ENCODE measurements at regions of chr2 and their contacts with region 1.

Region 1: DNA sequence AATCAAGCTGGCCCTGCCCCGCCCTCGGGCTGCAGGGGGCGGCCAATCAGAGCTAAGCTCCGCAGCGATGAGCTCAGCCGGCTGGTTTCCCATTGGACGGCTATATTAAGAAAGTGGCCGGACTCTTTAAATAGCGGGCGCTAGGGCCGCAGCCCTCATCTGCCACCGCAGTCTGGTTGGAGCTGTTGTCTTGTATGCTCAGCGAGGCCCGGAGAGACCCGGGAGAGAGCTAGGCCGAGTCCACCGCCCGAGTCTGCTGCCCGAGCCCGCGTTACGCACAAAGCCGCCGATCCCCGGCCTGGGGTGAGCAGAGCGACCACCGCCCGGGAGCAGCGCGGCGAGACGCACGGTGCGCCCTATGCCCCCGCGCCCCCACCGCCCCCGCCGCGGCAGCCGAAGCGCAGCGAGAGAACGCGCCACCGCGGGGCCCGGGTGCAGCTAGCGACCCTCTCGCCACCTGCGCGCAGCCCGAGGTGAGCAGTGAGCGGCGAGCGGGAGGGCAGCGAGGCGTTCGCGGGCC is at the start of gene RHOB:
- DNase-seq: peak; percentile 99
- ATAC-seq: peak; percentile 76 to 85
- H3K4me3 ChIP-seq: peak within 1 kb of the TSS; percentile 90
- H3K27ac ChIP-seq: peak within 1 kb of the TSS; percentile 95 to 98
- H3K4me1 ChIP-seq: peaks cover 52% of the 10 kb centered on the region
- CTCF ChIP-seq: no peak
- EP300 ChIP-seq: no peak
- POLR2A ChIP-seq: peak; percentile 99
- RAD21 ChIP-seq: no peak; a peak in 1 of 5 replicates
- polyA plus RNA-seq, gene RHOB: 110 and 157 TPM in 2 replicates

Region 2: GRCh38 chr2:20398956-20399567 is 47.9 kb before region 1 on chr2:
- CTCF ChIA-PET with region 1: interaction called, 59 read pairs
- POLR2A ChIA-PET with region 1: interaction called, 17 read pairs
- DNase-seq: no peak
- ATAC-seq: no peak
- H3K4me3 ChIP-seq: no peak overlapping the region
- H3K27ac ChIP-seq: no peak overlapping the region
- H3K4me1 ChIP-seq: no peaks in the 10 kb centered on the region
- CTCF ChIP-seq: no peak
- EP300 ChIP-seq: no peak
- POLR2A ChIP-seq: no peak
- RAD21 ChIP-seq: no peak

Region 3: DNA sequence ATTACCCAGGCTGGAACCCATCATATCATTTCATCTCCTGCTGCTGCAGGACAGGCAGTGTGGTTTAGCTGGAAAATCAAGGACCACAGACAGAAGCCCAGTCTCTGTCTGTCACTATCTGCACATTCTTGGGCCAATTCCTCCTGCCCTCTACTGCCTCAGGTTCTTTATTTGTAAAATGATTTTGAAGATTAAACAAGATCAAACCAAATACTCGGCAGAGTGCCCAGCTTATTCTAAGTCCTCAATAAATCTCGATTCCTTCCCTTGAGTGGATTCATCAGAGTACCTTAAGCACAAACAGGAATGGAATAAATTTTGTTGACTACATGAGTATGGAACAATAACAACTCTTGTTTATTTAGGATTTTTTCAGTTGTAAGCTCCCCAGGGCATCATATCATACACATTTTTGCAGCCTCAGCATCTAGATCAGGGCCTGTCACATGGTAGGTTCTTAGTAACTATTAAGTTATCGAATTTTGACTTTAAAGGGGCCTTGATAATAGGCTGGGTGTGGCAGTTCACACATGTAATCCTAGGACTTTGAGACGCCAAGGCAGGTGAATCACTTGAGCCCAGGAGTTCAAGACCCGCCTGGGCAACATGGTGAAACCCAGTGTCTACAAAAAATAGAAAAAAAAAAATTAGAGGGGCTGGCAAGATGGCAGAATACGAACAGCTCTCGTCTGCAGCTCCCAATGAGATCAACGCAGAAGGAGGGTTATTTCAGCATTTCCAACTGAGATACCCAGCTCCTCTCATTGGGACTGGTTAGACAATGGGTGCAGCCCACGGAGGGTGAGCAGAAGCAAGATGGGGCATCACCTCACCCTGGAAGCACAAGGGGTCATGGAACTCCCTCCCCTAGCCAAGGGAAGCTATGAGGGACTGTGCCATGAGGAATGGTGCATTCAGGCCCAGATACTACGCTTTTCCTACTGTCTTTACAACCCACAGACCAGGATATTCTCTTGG is 11.0 kb after region 1 on chr2:
- CTCF ChIA-PET with region 1: interaction called, 7 read pairs
- POLR2A ChIA-PET with region 1: interaction called, 18 read pairs
- DNase-seq: no peak
- ATAC-seq: no peak
- H3K4me3 ChIP-seq: no peak overlapping the region
- H3K27ac ChIP-seq: no peak overlapping the region
- H3K4me1 ChIP-seq: no peaks in the 10 kb centered on the region
- CTCF ChIP-seq: no peak
- EP300 ChIP-seq: no peak
- POLR2A ChIP-seq: no peak
- RAD21 ChIP-seq: no peak

Region 4: GRCh38 chr2:20496081-20496876 is 49.3 kb after region 1 on chr2:
- CTCF ChIA-PET with region 1: interaction called, 3 read pairs
- POLR2A ChIA-PET with region 1: interaction called, 16 read pairs
- DNase-seq: peak; percentile 40 to 43
- ATAC-seq: peak; percentile 57 to 63; a peak in 4 of 6 replicates
- H3K4me3 ChIP-seq: no peak overlapping the region
- H3K27ac ChIP-seq: peak overlapping the region; percentile 43 to 70
- H3K4me1 ChIP-seq: peaks cover 40% of the 10 kb centered on the region
- CTCF ChIP-seq: no peak
- EP300 ChIP-seq: no peak
- POLR2A ChIP-seq: no peak
- RAD21 ChIP-seq: no peak

Region 5: GRCh38 chr2:20584637-20585321 is 137.8 kb after region 1 on chr2:
- CTCF ChIA-PET with region 1: interaction called, 3 read pairs
- POLR2A ChIA-PET with region 1: interaction called, 45 read pairs
- DNase-seq: peak; percentile 70 to 89
- ATAC-seq: peak; percentile 67 to 84
- H3K4me3 ChIP-seq: no peak overlapping the region
- H3K27ac ChIP-seq: peak overlapping the region; percentile 70 to 90
- H3K4me1 ChIP-seq: peaks cover 46% of the 10 kb centered on the region
- CTCF ChIP-seq: no peak
- EP300 ChIP-seq: peak; percentile 13 to 48; a peak in 1 of 5 replicates
- POLR2A ChIP-seq: no peak
- RAD21 ChIP-seq: peak in 1 of 2 experiments; percentile 2; a peak in 1 of 5 replicates

Region 6: DNA sequence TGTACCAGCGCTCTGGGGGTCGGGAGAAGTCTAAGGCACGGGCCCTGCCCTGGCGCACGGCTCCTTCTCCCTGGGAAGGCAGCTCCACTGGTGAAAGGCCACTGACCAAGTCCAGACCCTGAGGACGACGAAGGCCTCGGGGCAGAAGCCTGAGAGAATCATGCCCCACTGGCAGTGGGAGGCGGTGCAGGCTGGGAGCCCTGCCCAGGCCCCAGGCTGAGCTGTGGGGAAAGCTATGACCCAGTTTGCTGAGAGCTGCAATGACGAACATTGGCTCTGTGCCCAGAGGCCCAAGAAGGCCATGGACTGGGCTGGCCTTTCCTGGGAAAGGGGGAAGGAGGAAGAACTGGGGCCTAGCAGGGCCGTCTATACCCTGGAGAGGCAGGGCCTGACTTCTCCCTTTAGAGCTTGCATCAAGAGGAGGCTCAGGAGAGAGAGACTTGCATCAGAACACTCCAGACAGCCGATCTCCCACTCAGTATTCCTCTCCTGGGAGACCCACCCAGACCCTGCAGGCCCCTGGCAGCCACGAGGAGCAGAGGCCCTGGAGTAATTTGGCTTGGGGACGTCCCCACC is 171.0 kb after region 1 on chr2:
- CTCF ChIA-PET with region 1: interaction called, 8 read pairs
- POLR2A ChIA-PET with region 1: interaction called, 137 read pairs
- DNase-seq: peak; percentile 90 to 95
- ATAC-seq: peak; percentile 87 to 94
- H3K4me3 ChIP-seq: no peak overlapping the region
- H3K27ac ChIP-seq: peak overlapping the region; percentile 89 to 90
- H3K4me1 ChIP-seq: peaks cover 26% of the 10 kb centered on the region
- CTCF ChIP-seq: no peak
- EP300 ChIP-seq: no peak; a peak in 1 of 5 replicates
- POLR2A ChIP-seq: peak; percentile 24; the same call in 1 of the 2 replicates
- RAD21 ChIP-seq: peak; percentile 21 to 30; a peak in 3 of 5 replicates

Region 7: DNA sequence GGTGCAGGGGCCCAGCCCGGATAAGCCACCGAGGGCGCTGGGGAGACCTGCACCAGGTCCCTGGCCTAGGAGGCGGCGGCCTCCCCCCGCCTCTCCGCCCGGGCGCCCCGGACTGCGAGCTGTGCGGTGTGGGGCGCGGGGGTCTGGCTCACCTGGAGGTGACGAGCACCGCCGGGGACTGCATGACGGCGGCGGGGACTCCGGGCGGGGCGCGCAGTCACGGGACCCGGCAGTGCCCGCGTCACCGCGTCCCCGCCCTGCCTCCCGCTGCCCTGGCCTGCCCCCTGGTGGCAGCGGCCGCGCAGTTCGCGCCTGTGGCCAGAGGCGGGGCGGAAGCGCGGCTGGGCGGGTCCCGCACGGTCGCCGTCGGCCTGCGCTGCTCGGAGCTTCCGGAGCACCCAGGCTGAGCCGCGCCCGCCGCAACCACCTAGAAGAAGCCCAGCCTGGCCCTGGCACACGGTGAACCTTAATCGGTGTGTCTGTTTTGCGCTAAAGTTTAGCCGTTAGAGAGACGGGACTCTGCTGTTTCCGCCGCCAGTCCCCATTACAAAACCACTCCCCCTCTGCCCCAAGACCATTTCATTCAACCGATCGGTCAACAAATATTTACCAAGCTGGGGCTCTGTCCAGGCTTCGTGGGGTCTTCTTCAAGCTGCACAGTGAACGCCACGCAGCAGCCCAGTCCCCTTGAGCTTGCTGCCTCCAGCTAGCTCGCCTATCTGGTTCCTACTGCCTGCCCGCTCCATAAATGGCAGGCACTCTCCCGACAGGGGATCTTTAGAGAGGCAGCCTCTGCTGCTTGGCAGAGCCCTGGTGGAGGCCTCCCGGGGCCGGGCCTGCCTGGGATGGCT is 204.1 kb after region 1 on chr2 and contains the start of gene HS1BP3:
- CTCF ChIA-PET with region 1: interaction called, 42 read pairs
- POLR2A ChIA-PET with region 1: interaction called, 73 read pairs
- DNase-seq: peak; percentile 82 to 85
- ATAC-seq: peak; percentile 82 to 97
- H3K4me3 ChIP-seq: peak within 1 kb of the TSS; percentile 89
- H3K27ac ChIP-seq: peak within 1 kb of the TSS; percentile 94
- H3K4me1 ChIP-seq: peaks cover 12% of the 10 kb centered on the region; the same call in 2 of the 3 replicates
- CTCF ChIP-seq: peak; percentile 99
- EP300 ChIP-seq: no peak
- POLR2A ChIP-seq: peak; percentile 92
- RAD21 ChIP-seq: peak; percentile 53 to 84
- polyA plus RNA-seq, gene HS1BP3: 12.4 and 13.8 TPM in 2 replicates

Measured in A549 (cell line).